ENCODE measurements at regions of chr19 and their contacts with region 1.

Region 1: DNA sequence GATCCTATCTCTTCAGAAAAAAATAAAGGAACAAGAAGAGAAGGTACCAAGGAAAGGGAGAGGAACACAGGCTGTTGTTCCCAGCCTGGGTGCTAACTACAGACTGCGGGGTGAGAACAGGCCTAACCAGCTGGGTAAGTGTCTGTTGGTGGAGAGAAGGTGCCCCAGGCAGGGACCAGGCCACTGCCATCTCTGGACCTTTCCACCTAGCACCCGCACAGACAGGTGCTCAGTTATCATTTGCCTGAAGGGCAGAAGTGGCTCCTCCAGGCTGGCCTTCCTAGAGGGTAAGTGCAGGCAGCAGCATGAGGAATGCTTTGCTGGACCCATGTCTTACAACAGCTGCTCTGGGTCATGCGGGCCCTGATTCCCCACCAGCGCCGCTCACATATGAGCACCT is 10.1 kb downstream of the DNMT1 start:
- DNase-seq: peak; percentile 32 to 67
- H3K4me3 ChIP-seq: no peak overlapping the region
- H3K4me3 Mint-ChIP-seq: no peak overlapping the region
- H3K27ac Mint-ChIP-seq: peak overlapping the region; percentile 40
- H3K4me1 ChIP-seq: no peaks in the 10 kb centered on the region
- H3K4me1 Mint-ChIP-seq: no peaks in the 10 kb centered on the region
- H3K27me3 ChIP-seq: no peaks in the 10 kb centered on the region
- H3K27me3 Mint-ChIP-seq: no peaks in the 10 kb centered on the region
- CTCF ChIP-seq: no peak

Region 2: DNA sequence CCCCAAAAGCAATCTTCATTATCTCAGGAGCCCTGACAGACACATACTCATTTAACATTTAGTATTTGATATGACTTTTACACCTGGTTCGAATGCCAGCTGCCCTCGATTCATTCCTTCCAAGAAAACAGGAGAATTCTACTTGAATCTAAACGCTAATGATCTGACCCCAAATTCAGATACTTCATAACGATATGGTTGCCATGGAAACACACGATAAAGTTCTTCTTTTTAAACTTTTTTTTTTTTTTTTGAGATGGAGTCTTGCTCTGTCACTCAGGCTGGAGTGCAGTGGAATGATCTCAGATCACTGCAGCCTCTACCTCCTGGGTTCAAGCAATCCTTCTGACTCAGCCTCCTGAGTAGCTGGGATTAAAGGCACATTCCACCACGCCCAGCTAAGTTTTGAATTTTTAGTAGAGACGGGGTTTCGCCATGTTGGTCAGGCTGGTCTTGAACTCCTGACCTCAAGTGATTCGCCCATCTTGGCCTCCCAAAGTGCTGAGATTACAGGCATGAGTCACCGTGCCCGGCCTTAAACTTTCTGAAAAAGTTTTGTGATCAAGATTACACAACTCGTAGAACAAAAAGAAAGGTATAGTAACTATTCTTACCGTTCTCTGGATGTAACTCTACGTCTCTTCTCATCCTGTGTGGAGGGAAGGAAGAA is 11.2 kb before region 1 on chr19:
- CTCF ChIA-PET with region 1: no interaction called
- POLR2A ChIA-PET with region 1: no interaction called
- intact Hi-C with region 1: no loop called
- DNase-seq: no peak
- H3K4me3 ChIP-seq: no peak overlapping the region
- H3K4me3 Mint-ChIP-seq: no peak overlapping the region
- H3K27ac Mint-ChIP-seq: no peak overlapping the region
- H3K4me1 ChIP-seq: no peaks in the 10 kb centered on the region
- H3K4me1 Mint-ChIP-seq: no peaks in the 10 kb centered on the region
- H3K27me3 ChIP-seq: no peaks in the 10 kb centered on the region
- H3K27me3 Mint-ChIP-seq: no peaks in the 10 kb centered on the region
- CTCF ChIP-seq: no peak

Region 3: DNA sequence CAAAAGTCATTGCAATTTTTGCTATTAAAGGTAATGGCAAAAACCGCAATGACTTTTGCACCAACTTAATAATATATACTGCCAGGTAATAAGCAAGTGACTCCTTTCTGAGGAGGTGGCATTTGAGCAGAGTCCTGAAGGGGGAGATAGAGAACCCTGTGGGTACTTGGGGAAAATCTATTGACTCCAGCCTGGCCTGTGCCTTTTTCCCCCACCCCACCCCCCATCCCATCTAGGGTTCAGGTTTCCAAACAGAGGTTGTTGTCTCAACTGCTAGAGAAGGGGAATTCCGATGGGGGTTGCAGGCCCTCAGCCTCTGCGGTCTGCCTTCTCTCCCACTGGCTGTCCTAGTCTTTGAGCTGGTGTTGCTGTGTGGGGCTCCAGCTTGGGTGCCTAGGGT is 35.0 kb after region 1 on chr19:
- CTCF ChIA-PET with region 1: interaction called, 11 read pairs
- POLR2A ChIA-PET with region 1: no interaction called
- intact Hi-C with region 1: no loop called
- DNase-seq: peak; percentile 31 to 44
- H3K4me3 ChIP-seq: no peak overlapping the region
- H3K4me3 Mint-ChIP-seq: no peak overlapping the region
- H3K27ac Mint-ChIP-seq: no peak overlapping the region
- H3K4me1 ChIP-seq: no peaks in the 10 kb centered on the region
- H3K4me1 Mint-ChIP-seq: no peaks in the 10 kb centered on the region
- H3K27me3 ChIP-seq: no peaks in the 10 kb centered on the region
- H3K27me3 Mint-ChIP-seq: no peaks in the 10 kb centered on the region
- CTCF ChIP-seq: peak in 1 of 2 experiments; percentile 37

Measured in Caco-2 (cell line).